CD4-positive, alpha-beta T cell (primary cell): ENCODE measurements at regions of chr5 and their contacts with region 1.

Region 1: GRCh38 chr5:62600560-62601252 is 22.1 kb downstream of the LRRC70 start:
- DNase-seq: no peak
- ATAC-seq: no peak
- H3K4me3 ChIP-seq: no peak overlapping the region
- H3K4me3 Mint-ChIP-seq: no peak overlapping the region
- H3K27ac ChIP-seq: no peak overlapping the region
- H3K27ac Mint-ChIP-seq: no peak overlapping the region
- H3K4me1 ChIP-seq: peaks cover 2% of the 10 kb centered on the region
- H3K4me1 Mint-ChIP-seq: peaks cover 18% of the 10 kb centered on the region
- H3K27me3 ChIP-seq: no peaks in the 10 kb centered on the region
- H3K27me3 Mint-ChIP-seq: no peaks in the 10 kb centered on the region
- CTCF ChIP-seq: no peak

Region 2: DNA sequence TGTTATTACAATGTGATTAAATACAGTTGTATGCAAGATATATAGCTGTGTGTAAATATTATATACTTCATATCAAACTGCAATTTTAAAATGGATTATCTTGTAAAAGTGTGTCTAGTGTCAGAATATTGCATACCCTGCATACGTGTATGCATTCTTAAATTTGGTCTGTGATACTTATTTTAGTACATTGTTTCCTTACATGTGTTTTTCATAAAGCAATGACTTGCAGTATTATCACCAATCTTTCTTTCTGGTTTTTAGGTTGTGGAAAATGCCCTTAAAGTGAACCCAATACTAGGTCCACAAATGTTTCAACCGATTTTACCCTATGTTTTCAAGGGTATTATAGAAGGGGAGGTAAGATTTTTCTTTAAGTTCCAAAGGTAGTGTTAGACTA is 50.6 kb before region 1 on chr5:
- CTCF ChIA-PET with region 1: no interaction called
- POLR2A ChIA-PET with region 1: no interaction called
- intact Hi-C with region 1: loop called in 1 of 2 experiments (anchors 2 kb)
- DNase-seq: no peak
- ATAC-seq: no peak
- H3K4me3 ChIP-seq: no peak overlapping the region
- H3K4me3 Mint-ChIP-seq: no peak overlapping the region
- H3K27ac ChIP-seq: no peak overlapping the region
- H3K27ac Mint-ChIP-seq: no peak overlapping the region
- H3K4me1 ChIP-seq: no peaks in the 10 kb centered on the region
- H3K4me1 Mint-ChIP-seq: no peaks in the 10 kb centered on the region
- H3K27me3 ChIP-seq: no peaks in the 10 kb centered on the region
- H3K27me3 Mint-ChIP-seq: no peaks in the 10 kb centered on the region
- CTCF ChIP-seq: no peak